Left cardiac atrium (tissue), 4 donors: ENCODE measurements at regions of chr12 and their contacts with region 1.

Region 1: GRCh38 chr12:106919910-106920544 is 35.7 kb upstream of the TMEM263 start:
- DNase-seq: no peak
- ATAC-seq: peak in 1 of 2 donors; percentile 40

Region 2: GRCh38 chr12:106123551-106124081 is 796.4 kb before region 1 on chr12:
- intact Hi-C with region 1: no loop called
- DNase-seq: no peak
- ATAC-seq: peak; percentile 74 to 75

Region 3: GRCh38 chr12:106380954-106381353 is 539.1 kb before region 1 on chr12:
- intact Hi-C with region 1: loop called (anchors 2 to 5 kb)
- DNase-seq: no peak
- ATAC-seq: no peak